Activated CD4-positive, alpha-beta memory T cell treated with anti-CD3 and anti-CD28 coated beads for 36 hours (primary cell): ENCODE measurements at regions of chr3 and their contacts with region 1.

Region 1: DNA sequence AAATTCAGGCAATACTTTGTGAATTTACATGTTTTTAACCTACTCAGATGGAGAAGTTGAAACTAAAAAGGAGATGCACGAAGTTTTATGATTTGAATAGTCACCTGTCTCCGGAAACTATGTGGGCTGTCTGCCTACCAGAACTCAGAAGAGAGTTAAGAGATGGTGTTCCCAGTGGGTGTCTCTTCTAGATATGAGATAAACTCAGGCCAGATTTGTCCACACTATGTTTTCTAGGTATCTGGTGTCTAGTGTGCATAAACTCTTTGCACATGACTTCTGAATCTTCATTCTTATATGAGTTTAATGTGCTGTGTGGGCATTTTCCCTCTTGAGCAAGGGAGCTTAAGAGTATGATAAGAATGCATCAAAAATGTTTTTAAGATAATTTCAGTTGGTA is 222.8 kb downstream of the FOXP1 start:
- DNase-seq: peak; percentile 52
- H3K4me3 Mint-ChIP-seq: peak overlapping the region; percentile 39
- H3K27ac Mint-ChIP-seq: peak overlapping the region; percentile 89
- H3K4me1 Mint-ChIP-seq: peaks cover 76% of the 10 kb centered on the region
- H3K27me3 Mint-ChIP-seq: no peaks in the 10 kb centered on the region

Region 2: GRCh38 chr3:70982700-70983140 is 378.0 kb before region 1 on chr3:
- CTCF ChIA-PET with region 1: no interaction called
- POLR2A ChIA-PET with region 1: no interaction called
- intact Hi-C with region 1: loop called (anchors 5 kb)
- DNase-seq: peak; percentile 70
- H3K4me3 Mint-ChIP-seq: peak overlapping the region; percentile 57
- H3K27ac Mint-ChIP-seq: peak overlapping the region; percentile 99
- H3K4me1 Mint-ChIP-seq: peaks cover 64% of the 10 kb centered on the region
- H3K27me3 Mint-ChIP-seq: no peaks in the 10 kb centered on the region

Region 3: GRCh38 chr3:71087143-71088018 is 273.4 kb before region 1 on chr3:
- CTCF ChIA-PET with region 1: interaction called, 4 read pairs
- POLR2A ChIA-PET with region 1: interaction called, 3 read pairs
- intact Hi-C with region 1: loop called (anchors 1 kb)
- DNase-seq: peak; percentile 62
- H3K4me3 Mint-ChIP-seq: peak overlapping the region; percentile 38
- H3K27ac Mint-ChIP-seq: peak overlapping the region; percentile 81
- H3K4me1 Mint-ChIP-seq: peaks cover 88% of the 10 kb centered on the region
- H3K27me3 Mint-ChIP-seq: no peaks in the 10 kb centered on the region

Region 4: DNA sequence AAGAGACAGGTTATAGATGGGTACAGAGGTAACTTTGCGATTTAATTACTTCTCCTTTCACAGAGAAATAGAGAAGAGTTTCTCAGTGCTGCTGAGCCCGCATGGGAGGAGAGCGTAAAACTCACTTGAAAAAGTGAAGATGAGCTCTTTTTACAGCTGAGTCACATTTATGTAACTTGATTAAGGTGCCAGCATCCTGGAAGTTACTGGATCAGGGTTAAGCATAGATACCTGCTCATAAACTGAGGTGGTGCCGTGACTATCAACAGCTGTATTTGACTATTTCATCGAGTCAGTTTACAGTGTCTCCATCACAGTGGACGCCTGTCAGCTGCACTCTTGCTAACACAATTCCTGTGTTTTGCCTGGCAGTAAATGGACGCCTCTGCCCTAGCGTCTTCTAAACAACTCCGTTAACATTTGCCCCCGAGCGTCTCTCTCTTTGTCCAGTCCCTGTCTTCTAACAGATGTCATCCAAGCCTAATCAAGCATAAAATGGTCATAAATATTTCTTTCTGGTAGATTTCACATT is 191.8 kb before region 1 on chr3:
- CTCF ChIA-PET with region 1: no interaction called
- POLR2A ChIA-PET with region 1: no interaction called
- intact Hi-C with region 1: no loop called
- DNase-seq: no peak
- H3K4me3 Mint-ChIP-seq: no peak overlapping the region
- H3K27ac Mint-ChIP-seq: no peak overlapping the region
- H3K4me1 Mint-ChIP-seq: peaks cover 18% of the 10 kb centered on the region
- H3K27me3 Mint-ChIP-seq: no peaks in the 10 kb centered on the region

Region 5: DNA sequence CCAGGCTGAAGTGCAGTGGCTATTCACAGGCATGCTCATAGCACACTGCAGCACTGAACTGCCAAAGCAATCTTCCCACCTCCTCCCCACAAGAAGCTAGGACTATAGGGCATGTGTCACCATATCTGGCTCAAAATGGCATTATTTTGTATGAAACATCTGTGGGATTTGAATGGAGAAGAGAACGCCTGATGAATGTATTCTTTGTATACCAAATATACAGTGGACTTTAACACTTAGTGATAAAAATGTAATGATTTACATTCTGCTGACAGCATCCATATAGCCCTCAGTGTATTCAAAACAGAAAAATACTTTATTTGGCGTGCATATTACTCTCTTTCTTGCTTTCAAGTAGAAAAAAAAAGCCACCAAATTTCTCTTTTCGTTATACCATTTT is 35.0 kb before region 1 on chr3:
- CTCF ChIA-PET with region 1: no interaction called
- POLR2A ChIA-PET with region 1: no interaction called
- intact Hi-C with region 1: no loop called
- DNase-seq: no peak
- H3K4me3 Mint-ChIP-seq: no peak overlapping the region
- H3K27ac Mint-ChIP-seq: no peak overlapping the region
- H3K4me1 Mint-ChIP-seq: peaks cover 4% of the 10 kb centered on the region
- H3K27me3 Mint-ChIP-seq: no peaks in the 10 kb centered on the region

Region 6: DNA sequence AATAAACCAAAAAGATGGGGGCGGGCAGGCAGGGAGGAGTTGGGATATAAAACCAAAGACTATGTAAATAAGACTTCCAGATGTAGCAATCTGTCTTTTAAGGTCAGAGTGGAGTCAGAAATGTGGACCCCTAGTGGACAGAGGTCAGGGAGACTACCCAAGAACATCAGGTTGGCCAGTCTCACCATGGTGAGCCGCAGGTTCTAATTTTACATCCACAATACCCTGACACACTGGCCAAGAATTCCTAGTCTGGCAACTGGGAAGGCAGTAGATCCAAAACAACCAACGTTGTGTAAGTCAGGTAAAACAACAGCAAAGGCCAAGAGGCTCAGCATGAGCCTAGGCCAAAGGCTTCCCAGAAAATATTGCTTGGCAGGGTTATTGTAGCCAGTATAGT is 19.3 kb after region 1 on chr3:
- CTCF ChIA-PET with region 1: interaction called, 3 read pairs
- POLR2A ChIA-PET with region 1: interaction called, 46 read pairs
- intact Hi-C with region 1: loop called (anchors 1 kb)
- DNase-seq: no peak
- H3K4me3 Mint-ChIP-seq: no peak overlapping the region
- H3K27ac Mint-ChIP-seq: peak overlapping the region; percentile 85
- H3K4me1 Mint-ChIP-seq: peaks cover 82% of the 10 kb centered on the region
- H3K27me3 Mint-ChIP-seq: no peaks in the 10 kb centered on the region

Region 7: DNA sequence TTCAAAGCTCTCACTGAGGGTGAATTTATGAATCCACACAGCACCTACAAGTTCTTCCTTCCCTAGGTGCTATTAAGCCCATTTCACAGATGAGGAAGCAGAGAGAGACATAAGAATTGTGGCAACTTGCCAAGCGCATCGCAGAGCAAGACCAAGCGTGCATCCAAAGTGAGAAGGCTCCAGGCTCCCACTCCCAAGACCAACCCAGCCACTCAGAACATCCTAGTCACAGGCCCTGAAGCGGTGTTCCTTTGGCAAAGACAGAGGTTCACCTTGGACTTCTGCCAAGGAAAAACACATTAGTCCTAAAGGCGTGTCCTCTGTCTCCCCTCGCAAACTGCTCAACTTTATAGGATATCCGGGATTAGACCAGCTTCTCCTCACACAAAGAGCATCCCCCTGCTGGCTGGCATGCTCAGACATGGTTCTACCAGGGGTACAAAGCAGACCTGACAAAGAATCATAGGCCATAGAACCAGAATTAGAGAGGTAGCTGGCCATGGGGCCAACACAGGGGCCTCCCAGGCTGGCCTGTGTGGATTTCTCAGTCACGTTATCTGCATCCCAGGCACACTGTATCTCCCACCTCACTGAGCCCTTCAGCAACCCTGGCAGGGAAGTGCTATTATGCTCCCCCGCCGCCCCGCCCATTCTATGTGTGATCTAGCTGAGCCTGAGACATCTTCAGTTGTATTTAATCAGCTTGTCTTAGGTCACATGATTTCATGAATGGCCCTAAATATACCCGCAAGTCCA is 62.6 kb after region 1 on chr3:
- CTCF ChIA-PET with region 1: interaction called, 3 read pairs
- POLR2A ChIA-PET with region 1: interaction called, 16 read pairs
- intact Hi-C with region 1: loop called (anchors 1 kb)
- DNase-seq: no peak
- H3K4me3 Mint-ChIP-seq: no peak overlapping the region
- H3K27ac Mint-ChIP-seq: peak overlapping the region; percentile 85
- H3K4me1 Mint-ChIP-seq: peaks cover 81% of the 10 kb centered on the region
- H3K27me3 Mint-ChIP-seq: no peaks in the 10 kb centered on the region

Region 8: GRCh38 chr3:71495708-71496472 is 135.1 kb after region 1 on chr3:
- CTCF ChIA-PET with region 1: no interaction called
- POLR2A ChIA-PET with region 1: no interaction called
- intact Hi-C with region 1: loop called (anchors 1 kb)
- DNase-seq: peak; percentile 62
- H3K4me3 Mint-ChIP-seq: peak overlapping the region; percentile 58
- H3K27ac Mint-ChIP-seq: peak overlapping the region; percentile 77
- H3K4me1 Mint-ChIP-seq: peaks cover 73% of the 10 kb centered on the region
- H3K27me3 Mint-ChIP-seq: no peaks in the 10 kb centered on the region

Region 9: DNA sequence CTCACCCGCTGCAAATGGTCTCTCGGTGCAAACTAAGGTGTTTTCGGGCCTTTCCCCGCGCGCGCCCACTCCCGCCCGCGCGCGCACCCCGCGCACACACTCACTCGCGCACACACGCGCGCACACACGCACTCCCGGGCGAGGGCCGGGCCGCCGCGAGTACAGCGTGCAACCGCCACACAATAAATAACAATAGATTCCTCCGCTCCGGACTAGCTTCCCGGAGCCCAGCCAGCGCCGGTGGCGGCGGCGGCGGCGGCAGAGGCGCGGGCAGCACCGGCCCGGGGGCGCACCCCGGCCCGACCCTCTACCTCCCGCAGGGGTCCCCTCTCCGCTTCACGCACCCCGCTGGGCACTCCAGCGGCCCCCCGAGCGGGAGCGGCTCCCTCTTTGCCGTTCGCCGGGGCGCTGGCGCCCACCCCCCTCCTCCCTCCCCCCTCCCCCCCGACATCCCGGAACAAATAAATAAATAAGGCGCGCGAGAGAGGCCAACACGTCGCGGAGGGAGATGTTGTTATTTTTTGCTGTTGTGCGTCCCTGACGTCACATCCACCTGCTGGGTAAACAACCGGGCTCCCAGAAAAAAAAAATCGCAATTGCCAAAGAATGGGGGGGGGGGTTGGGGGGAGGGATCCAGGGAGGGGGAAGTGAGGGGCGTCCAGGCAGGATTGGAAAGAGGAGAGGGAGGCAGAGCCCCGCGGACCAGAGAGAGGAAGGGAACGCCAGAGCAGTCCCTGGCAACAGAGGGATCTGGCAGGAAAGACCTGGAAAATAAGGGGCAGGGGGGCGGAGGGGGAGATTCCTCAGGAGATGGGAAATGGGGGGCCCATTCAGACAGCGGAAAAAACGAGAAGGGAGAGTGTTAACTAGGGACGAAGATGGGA is 223.0 kb after region 1 on chr3 and contains the start of gene FOXP1:
- CTCF ChIA-PET with region 1: interaction called, 9 read pairs
- POLR2A ChIA-PET with region 1: interaction called, 9 read pairs
- intact Hi-C with region 1: loop called (anchors 1 kb)
- DNase-seq: peak; percentile 75
- H3K4me3 Mint-ChIP-seq: peak within 1 kb of the TSS; percentile 88
- H3K27ac Mint-ChIP-seq: peak within 1 kb of the TSS; percentile 91
- H3K4me1 Mint-ChIP-seq: peaks cover 56% of the 10 kb centered on the region
- H3K27me3 Mint-ChIP-seq: peaks cover 1% of the 10 kb centered on the region
- total RNA-seq, gene FOXP1: 94.4 to 102 TPM